Activated T-helper 1 cell treated with anti-CD3 and anti-CD28 coated beads, Interleukin-12 subunit alpha, Interleukin-12 subunit beta, Interleukin-2, Interleukin-4 antibody, amounts not matched to agents 30 ng/mL and 10 ng/mL and 1 ng/mL, durations not matched to agents 14 hours and 24 hours and 36 hours (primary cell): ENCODE measurements at regions of chr2 and their contacts with region 1.

Region 1: GRCh38 chr2:237674731-237675276 is 47.4 kb downstream of the LRRFIP1 start:
- DNase-seq: peak; percentile 80
- H3K4me3 Mint-ChIP-seq: peak overlapping the region; percentile 75
- H3K27ac Mint-ChIP-seq: peak overlapping the region; percentile 96
- H3K4me1 Mint-ChIP-seq: peaks cover 51% of the 10 kb centered on the region
- H3K27me3 Mint-ChIP-seq: peaks cover 3% of the 10 kb centered on the region

Region 2: GRCh38 chr2:237434866-237435311 is 239.9 kb before region 1 on chr2:
- intact Hi-C with region 1: loop called (anchors 5 kb)
- DNase-seq: peak; percentile 62
- H3K4me3 Mint-ChIP-seq: peak overlapping the region; percentile 82
- H3K27ac Mint-ChIP-seq: peak overlapping the region; percentile 91
- H3K4me1 Mint-ChIP-seq: peaks cover 91% of the 10 kb centered on the region
- H3K27me3 Mint-ChIP-seq: peaks cover 5% of the 10 kb centered on the region

Region 3: DNA sequence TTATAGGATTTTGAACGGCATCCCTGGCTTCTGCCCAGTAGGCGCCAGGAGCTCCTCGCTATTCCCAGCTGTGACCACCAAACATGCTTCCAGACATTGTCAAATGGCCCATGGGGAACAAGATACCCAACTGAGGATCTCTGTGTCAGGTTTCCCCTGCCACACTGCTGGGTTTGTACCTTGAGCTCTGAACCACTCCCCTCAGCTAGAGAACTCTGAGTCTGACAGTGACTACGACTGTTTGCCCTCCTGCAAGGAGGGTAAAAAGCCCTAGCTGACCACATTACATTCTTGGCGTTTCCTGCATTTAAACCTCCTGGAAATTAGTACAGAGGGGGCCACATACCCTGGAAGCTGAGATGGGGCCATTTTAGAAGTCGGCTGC is 35.0 kb before region 1 on chr2:
- intact Hi-C with region 1: no loop called
- DNase-seq: no peak
- H3K4me3 Mint-ChIP-seq: no peak overlapping the region
- H3K27ac Mint-ChIP-seq: no peak overlapping the region
- H3K4me1 Mint-ChIP-seq: peaks cover 7% of the 10 kb centered on the region
- H3K27me3 Mint-ChIP-seq: peaks cover 7% of the 10 kb centered on the region

Region 4: DNA sequence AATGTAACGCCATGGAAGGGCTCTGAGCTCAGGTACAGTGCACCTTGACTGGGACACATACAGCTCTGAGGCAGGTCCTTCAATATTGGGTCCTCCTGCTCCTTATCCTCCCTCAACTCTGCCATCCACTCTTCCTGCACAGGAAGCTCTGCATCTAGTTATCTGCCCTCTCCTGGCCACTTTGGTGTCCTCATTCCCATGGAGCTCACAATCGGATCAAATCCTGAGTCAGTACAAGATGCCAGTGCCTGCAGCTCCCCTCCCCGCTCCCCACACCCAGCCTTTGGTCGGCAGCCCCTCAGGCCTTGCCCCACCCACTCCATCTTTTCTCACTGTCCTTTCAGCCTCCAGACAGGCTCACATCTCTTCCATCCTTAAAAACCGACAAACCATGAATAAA is 10.6 kb after region 1 on chr2:
- intact Hi-C with region 1: loop called (anchors 1 kb)
- DNase-seq: no peak
- H3K4me3 Mint-ChIP-seq: no peak overlapping the region
- H3K27ac Mint-ChIP-seq: no peak overlapping the region
- H3K4me1 Mint-ChIP-seq: peaks cover 43% of the 10 kb centered on the region
- H3K27me3 Mint-ChIP-seq: no peaks in the 10 kb centered on the region

Region 5: DNA sequence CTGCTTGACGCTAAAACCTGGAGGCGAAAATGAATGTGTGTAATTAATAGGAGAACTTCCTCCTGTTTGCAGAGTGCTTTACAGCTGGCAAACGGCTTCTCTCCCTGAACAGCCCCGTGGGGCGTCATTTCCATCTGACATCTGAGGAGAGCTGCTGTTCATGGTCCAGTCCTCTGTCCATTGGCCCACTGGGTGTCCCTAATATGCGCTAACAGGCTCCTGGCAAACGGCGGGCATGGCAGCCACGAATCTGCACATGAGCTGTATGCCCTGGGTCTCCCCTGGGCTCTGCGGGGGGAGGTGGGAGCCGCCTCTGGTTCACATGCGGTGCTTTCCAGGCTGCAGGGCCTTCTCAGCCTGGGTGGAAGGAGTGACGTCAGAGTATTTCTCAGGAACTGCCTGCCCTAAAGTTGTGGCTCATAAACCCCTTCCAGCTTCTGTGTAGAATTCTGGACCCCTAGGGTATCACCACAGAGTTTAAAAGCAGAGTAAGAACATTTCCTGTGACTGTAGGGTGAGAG is 25.8 kb after region 1 on chr2:
- intact Hi-C with region 1: loop called (anchors 1 kb)
- DNase-seq: peak; percentile 76
- H3K4me3 Mint-ChIP-seq: peak overlapping the region; percentile 78
- H3K27ac Mint-ChIP-seq: peak overlapping the region; percentile 96
- H3K4me1 Mint-ChIP-seq: peaks cover 93% of the 10 kb centered on the region
- H3K27me3 Mint-ChIP-seq: no peaks in the 10 kb centered on the region

Region 6: DNA sequence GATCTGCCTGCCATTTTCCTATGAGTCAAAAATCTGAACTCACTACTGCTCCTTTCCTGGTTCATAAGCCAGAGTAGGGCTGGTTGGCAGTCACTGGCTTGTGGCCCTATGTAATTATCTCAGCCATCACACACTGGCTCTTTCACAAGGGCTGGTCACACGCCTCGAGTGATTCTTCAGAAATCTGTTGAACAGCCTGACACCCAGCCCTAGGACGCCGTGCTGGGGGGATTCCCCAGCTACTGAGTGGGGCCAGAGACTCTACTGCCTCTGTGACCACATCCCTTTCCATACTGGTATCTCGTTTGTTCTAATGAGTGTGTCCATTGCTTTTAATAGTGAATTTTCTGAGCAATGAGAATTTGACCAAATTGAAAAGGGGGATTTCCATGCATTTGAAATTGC is 78.0 kb after region 1 on chr2:
- intact Hi-C with region 1: loop called (anchors 2 kb)
- DNase-seq: peak; percentile 26
- H3K4me3 Mint-ChIP-seq: no peak overlapping the region
- H3K27ac Mint-ChIP-seq: peak overlapping the region; percentile 69
- H3K4me1 Mint-ChIP-seq: peaks cover 21% of the 10 kb centered on the region
- H3K27me3 Mint-ChIP-seq: no peaks in the 10 kb centered on the region

Region 7: DNA sequence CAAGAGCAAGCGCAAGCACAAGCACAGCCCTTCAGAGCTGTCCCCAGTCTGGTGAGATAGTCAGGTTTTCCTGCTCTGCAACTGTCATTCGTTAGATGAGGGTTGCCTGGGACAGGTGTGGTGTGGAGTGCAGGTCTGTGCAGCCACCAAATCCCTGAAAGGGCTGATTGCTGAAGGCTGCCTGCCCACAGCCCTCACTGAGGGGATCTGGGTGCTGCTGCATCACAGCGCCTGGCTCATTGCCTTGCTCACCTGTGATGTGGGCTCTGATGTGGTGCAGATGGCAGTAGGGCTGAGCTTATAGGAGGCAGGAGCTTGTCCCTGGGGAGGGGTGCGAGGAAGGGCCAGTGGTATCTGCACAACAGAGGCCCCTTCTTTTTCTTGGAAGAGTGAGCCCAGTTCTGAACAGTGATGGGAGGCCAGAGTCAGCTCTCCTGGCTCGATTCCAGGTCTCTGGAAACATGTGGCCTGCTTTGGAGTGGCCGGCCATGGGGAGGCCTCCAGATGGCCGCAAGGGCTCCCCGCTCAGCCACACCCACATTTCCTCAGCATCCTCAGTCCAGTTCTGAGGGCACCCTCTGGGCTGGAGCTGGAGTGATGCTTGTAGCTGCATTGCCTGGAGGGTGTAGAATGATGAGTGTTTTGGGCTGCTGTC is 303.4 kb after region 1 on chr2:
- intact Hi-C with region 1: no loop called
- DNase-seq: no peak
- H3K4me3 Mint-ChIP-seq: no peak overlapping the region
- H3K27ac Mint-ChIP-seq: no peak overlapping the region
- H3K4me1 Mint-ChIP-seq: peaks cover 59% of the 10 kb centered on the region
- H3K27me3 Mint-ChIP-seq: no peaks in the 10 kb centered on the region

Region 8: GRCh38 chr2:237998530-237998929 is 323.7 kb after region 1 on chr2:
- intact Hi-C with region 1: loop called (anchors 2 kb)
- DNase-seq: peak; percentile 33
- H3K4me3 Mint-ChIP-seq: peak overlapping the region; percentile 68
- H3K27ac Mint-ChIP-seq: peak overlapping the region; percentile 97
- H3K4me1 Mint-ChIP-seq: peaks cover 54% of the 10 kb centered on the region
- H3K27me3 Mint-ChIP-seq: no peaks in the 10 kb centered on the region

Region 9: GRCh38 chr2:238203094-238203972 is 528.5 kb after region 1 on chr2 and contains the start of gene ILKAP:
- intact Hi-C with region 1: loop called (anchors 10 kb)
- DNase-seq: peak; percentile 88
- H3K4me3 Mint-ChIP-seq: peak within 1 kb of the TSS; percentile 89
- H3K27ac Mint-ChIP-seq: peak within 1 kb of the TSS; percentile 89
- H3K4me1 Mint-ChIP-seq: peaks cover 45% of the 10 kb centered on the region
- H3K27me3 Mint-ChIP-seq: no peaks in the 10 kb centered on the region
- total RNA-seq, gene ILKAP: 77.3 and 79.9 TPM in 2 replicates

Region 10: DNA sequence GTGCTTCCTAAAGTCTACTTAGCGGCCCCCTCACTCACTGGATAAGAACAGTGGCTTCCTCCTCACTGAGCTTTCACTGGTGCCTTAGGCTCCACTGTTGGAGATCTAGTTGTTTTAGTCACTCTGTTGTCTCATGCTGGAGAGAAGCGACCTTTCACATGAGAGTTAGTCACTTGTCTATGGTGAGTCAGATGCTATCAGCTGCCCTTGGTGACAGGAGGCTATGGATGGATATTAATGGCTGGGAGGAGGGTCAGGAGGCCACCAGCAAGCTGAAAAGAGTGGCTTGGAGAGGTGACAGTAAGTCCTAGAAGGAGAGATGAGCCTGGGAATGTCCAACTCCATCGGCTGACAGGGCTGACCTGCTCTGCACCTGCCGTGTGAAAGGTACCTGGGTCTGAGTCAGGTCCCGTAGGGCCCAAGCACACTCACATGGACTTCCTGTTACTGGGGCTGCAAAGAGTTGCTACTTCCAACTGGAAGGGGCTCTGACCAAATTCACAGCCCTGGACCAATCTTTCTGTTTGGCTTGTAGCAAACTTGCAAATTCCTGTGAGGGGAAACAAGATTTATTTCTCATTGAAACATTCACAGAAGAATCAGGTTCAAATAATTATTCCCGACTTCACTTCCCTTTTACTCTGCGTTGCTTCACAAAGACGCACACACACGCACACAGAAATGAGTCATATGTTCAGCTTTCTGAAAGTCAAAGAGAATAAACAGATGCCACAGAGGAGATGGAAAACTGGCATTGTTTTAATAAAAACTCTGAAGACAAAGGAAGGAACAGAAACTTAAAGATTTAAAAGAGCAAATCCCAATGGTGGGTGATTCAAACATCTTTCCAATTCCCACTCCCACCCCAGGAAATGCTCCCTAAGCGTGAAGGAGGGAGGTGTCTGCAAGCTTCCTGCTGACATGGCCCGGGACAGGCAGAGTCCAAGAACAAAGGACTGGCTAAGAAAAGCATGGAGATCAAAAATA is 969.6 kb after region 1 on chr2:
- intact Hi-C with region 1: no loop called
- DNase-seq: no peak
- H3K4me3 Mint-ChIP-seq: no peak overlapping the region
- H3K27ac Mint-ChIP-seq: no peak overlapping the region
- H3K4me1 Mint-ChIP-seq: peaks cover 14% of the 10 kb centered on the region
- H3K27me3 Mint-ChIP-seq: peaks cover 2% of the 10 kb centered on the region